WTC11 (cell line): ENCODE measurements at regions of chr21 and their contacts with region 1.

Region 1: DNA sequence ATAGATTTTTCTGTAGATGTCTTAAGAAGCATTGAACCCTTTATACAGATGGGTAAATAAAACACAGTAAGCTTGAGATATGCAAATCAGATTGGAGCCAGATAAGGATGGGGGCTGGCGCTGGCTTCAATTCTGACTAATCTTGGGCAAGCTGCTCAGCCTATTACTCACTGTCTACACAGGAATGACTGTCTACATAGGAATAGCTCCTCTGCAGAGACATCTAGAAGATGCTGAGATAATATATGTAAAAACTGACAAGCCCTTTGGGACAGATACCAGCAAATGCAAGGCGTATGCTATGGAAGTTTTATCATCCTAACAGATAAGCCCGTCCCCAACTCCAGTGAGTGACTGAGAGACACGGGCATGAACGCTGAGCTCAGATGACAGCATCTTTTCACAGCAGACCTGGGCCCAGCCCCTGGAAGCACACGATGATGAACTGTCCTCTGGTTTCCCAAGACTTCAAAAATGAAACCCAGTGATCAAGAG is 1.7 kb downstream of the CLDN14 start:
- DNase-seq: no peak
- ATAC-seq: no peak
- H3K4me3 Mint-ChIP-seq: no peak overlapping the region
- H3K27ac Mint-ChIP-seq: no peak overlapping the region
- H3K4me1 Mint-ChIP-seq: peaks cover 2% of the 10 kb centered on the region; the same call in 1 of the 2 replicates
- H3K27me3 Mint-ChIP-seq: no peaks in the 10 kb centered on the region
- CTCF ChIP-seq: no peak

Region 2: GRCh38 chr21:36306872-36307534 is 171.3 kb before region 1 on chr21:
- CTCF ChIA-PET with region 1: no interaction called
- POLR2A ChIA-PET with region 1: no interaction called
- DNase-seq: no peak
- ATAC-seq: peak; percentile 79
- H3K4me3 Mint-ChIP-seq: no peak overlapping the region
- H3K27ac Mint-ChIP-seq: peak overlapping the region; percentile 49; the same call in 1 of the 2 replicates
- H3K4me1 Mint-ChIP-seq: peaks cover 11% of the 10 kb centered on the region; the same call in 1 of the 2 replicates
- H3K27me3 Mint-ChIP-seq: peaks cover 96% of the 10 kb centered on the region
- CTCF ChIP-seq: no peak

Region 3: DNA sequence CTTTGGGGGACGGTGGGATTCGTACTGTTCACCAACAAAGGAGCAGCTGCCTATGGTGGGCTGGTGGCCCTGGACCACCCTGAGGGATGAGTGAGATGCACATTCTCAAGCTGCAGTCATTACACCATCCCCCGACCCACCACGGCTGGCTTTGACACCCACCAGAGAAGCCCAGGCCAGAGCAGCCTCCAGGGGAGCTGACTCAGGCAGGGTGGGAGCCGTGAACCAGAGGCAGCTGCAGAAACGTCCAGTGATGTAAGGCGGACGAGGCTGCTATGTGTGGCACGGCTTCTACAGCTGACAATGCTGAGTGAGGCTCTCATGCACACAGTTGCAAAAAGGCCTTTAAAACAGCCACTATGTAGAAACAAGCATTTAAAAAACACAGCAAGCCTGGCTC is 53.0 kb before region 1 on chr21:
- CTCF ChIA-PET with region 1: interaction called, 10 read pairs
- POLR2A ChIA-PET with region 1: no interaction called
- DNase-seq: no peak
- ATAC-seq: no peak
- H3K4me3 Mint-ChIP-seq: no peak overlapping the region
- H3K27ac Mint-ChIP-seq: no peak overlapping the region
- H3K4me1 Mint-ChIP-seq: peaks cover 24% of the 10 kb centered on the region
- H3K27me3 Mint-ChIP-seq: no peaks in the 10 kb centered on the region
- CTCF ChIP-seq: no peak